Right cardiac atrium (tissue), 5 donors: ENCODE measurements at regions of chr3 and their contacts with region 1.

Region 1: GRCh38 chr3:16533928-16534574 is 20.6 kb upstream of the RFTN1 start:
- DNase-seq: no peak
- ATAC-seq: no peak
- H3K4me3 ChIP-seq: no peak overlapping the region
- H3K27ac ChIP-seq: no peak overlapping the region
- H3K4me1 ChIP-seq: peaks cover 3% of the 10 kb centered on the region
- H3K27me3 ChIP-seq: no peaks in the 10 kb centered on the region

Region 2: GRCh38 chr3:16280671-16281070 is 253.4 kb before region 1 on chr3:
- intact Hi-C with region 1: loop called in 1 of 4 experiments (anchors 5 kb)
- DNase-seq: no peak
- ATAC-seq: no peak
- H3K4me3 ChIP-seq: no peak overlapping the region
- H3K27ac ChIP-seq: no peak overlapping the region
- H3K4me1 ChIP-seq: peaks cover 2% of the 10 kb centered on the region
- H3K27me3 ChIP-seq: no peaks in the 10 kb centered on the region

Region 3: GRCh38 chr3:16589867-16590624 is 56.0 kb after region 1 on chr3:
- intact Hi-C with region 1: no loop called
- DNase-seq: no peak
- ATAC-seq: no peak
- H3K4me3 ChIP-seq: no peak overlapping the region
- H3K27ac ChIP-seq: no peak overlapping the region
- H3K4me1 ChIP-seq: no peaks in the 10 kb centered on the region
- H3K27me3 ChIP-seq: no peaks in the 10 kb centered on the region